AG04450 (cell line): ENCODE measurements at regions of chr5 and their contacts with region 1.

Region 1: DNA sequence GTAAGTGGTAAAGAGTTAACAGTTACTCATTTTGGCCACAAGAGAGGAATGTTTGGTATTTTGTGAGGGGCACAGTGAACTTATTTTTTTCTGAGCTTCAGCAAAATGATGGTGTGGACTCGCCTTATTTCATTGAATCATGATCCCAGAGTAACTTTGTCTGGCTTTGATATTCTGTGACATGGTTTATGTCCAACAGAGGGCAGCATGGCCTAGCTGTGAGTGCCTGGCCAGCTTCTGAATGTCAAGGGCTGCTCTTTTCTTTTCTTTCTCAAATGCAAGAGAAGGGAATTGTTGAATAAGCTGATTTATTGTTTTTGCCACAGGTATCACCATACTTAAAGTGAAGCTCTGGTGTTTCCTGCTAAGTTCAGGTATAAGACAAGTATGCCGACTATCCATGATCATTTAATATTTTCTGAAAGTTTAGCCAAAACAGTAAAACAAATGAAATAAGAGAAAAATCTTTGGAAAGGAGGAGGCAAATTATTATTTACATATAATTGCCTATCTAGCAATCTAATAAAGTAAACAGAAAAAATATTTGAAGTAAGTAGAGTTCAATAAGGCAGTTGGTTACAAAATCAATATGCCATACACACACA is 31.7 kb downstream of the MRPL22 start:
- DNase-seq: no peak
- H3K4me3 ChIP-seq: no peak overlapping the region
- H3K27ac ChIP-seq: no peak overlapping the region
- H3K27me3 ChIP-seq: no peaks in the 10 kb centered on the region
- CTCF ChIP-seq: peak; percentile 79

Region 2: DNA sequence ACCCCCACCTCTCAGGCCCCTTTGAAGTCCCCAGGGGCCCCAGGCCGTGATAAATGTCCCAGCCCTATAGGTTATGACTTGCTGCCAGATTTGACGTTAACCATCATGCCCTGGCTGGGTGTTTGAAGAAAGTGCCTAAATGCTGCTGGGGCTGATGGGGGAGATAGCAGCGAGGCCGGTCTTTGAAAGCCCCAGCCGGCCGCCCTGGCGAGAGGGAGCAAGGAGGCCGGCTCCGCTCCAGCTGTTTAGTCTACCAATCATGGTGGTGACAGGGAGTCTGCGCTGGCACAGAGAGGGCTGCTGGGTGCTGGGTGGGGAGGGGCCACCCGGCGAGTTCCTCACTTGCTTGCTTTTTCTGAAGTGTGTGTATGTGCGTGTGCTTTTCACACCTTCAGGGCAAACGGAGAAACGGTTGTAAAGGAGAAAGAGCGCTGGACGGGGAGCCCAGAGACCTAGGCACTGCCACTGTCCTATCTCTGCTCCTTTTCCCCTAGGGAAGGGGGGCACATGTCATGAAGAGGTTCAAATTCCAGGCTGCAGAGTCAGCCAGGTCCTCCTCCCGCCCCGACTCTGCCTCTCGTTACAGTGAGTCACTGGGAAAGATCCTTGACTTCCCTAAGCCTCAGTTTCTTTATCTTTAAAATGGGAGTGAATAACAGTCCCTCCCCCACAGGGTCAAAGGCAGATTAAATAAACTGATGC is 368.4 kb before region 1 on chr5:
- CTCF ChIA-PET with region 1: no interaction called
- POLR2A ChIA-PET with region 1: no interaction called
- DNase-seq: no peak
- H3K4me3 ChIP-seq: no peak overlapping the region; the same call in 1 of the 2 replicates
- H3K27ac ChIP-seq: no peak overlapping the region
- H3K27me3 ChIP-seq: peaks cover 32% of the 10 kb centered on the region
- CTCF ChIP-seq: no peak

Region 3: GRCh38 chr5:154945695-154946301 is 26.8 kb before region 1 on chr5:
- CTCF ChIA-PET with region 1: interaction called, 17 read pairs
- POLR2A ChIA-PET with region 1: no interaction called
- DNase-seq: no peak
- H3K4me3 ChIP-seq: no peak overlapping the region
- H3K27ac ChIP-seq: no peak overlapping the region
- H3K27me3 ChIP-seq: no peaks in the 10 kb centered on the region
- CTCF ChIP-seq: peak; percentile 69

Region 4: GRCh38 chr5:154962494-154962893 is 10.1 kb before region 1 on chr5:
- CTCF ChIA-PET with region 1: interaction called, 29 read pairs
- POLR2A ChIA-PET with region 1: no interaction called
- DNase-seq: no peak
- H3K4me3 ChIP-seq: no peak overlapping the region
- H3K27ac ChIP-seq: no peak overlapping the region
- H3K27me3 ChIP-seq: no peaks in the 10 kb centered on the region
- CTCF ChIP-seq: no peak

Region 5: DNA sequence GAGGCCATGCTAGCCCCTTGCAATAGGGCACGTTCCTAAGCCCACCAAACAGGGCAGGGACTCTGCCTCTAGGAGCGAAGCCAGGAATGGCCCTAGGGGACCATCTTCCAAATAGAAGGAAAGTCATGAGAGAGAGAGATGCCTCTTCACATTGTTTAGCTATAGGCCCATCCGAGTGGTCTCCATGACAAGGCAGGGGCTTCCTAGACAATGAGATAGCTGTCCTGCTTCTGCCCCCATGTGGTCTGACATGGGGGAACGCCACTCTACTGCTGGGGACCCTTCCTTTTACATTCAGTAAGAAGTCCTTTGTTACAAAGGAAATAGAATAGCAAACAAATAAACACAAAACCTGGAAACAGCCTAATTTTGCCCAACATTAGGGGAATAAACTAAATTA is 23.1 kb after region 1 on chr5:
- CTCF ChIA-PET with region 1: interaction called, 19 read pairs
- POLR2A ChIA-PET with region 1: interaction called, 3 read pairs
- DNase-seq: no peak
- H3K4me3 ChIP-seq: no peak overlapping the region
- H3K27ac ChIP-seq: no peak overlapping the region
- H3K27me3 ChIP-seq: no peaks in the 10 kb centered on the region
- CTCF ChIP-seq: no peak

Region 6: GRCh38 chr5:155004138-155004744 is 31.7 kb after region 1 on chr5:
- CTCF ChIA-PET with region 1: interaction called, 14 read pairs
- POLR2A ChIA-PET with region 1: no interaction called
- DNase-seq: no peak
- H3K4me3 ChIP-seq: no peak overlapping the region
- H3K27ac ChIP-seq: no peak overlapping the region
- H3K27me3 ChIP-seq: no peaks in the 10 kb centered on the region
- CTCF ChIP-seq: peak; percentile 37; the same call in 1 of the 2 replicates

Region 7: GRCh38 chr5:155136216-155136850 is 163.8 kb after region 1 on chr5:
- CTCF ChIA-PET with region 1: interaction called, 14 read pairs
- POLR2A ChIA-PET with region 1: no interaction called
- DNase-seq: no peak
- H3K4me3 ChIP-seq: no peak overlapping the region
- H3K27ac ChIP-seq: no peak overlapping the region
- H3K27me3 ChIP-seq: no peaks in the 10 kb centered on the region
- CTCF ChIP-seq: no peak

Region 8: DNA sequence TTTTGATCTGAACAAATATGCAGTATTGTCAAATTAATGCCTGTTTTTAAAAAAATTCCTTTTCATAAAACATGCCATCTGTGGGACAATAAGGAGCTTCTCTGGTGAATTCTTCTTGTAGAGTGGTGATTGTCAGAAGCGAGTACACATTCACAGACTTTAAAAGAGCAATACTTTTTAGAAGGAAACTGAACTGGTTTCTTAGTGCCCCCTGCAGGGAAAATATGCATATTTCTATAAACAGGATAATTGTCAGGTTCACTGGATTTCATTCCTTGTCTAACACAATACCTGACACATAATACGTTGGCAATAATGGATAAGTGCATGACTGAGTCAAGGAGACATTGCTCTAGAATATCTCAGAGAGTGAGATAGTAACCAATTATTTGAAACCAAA is 174.6 kb after region 1 on chr5:
- CTCF ChIA-PET with region 1: interaction called, 71 read pairs
- POLR2A ChIA-PET with region 1: no interaction called
- DNase-seq: no peak
- H3K4me3 ChIP-seq: no peak overlapping the region
- H3K27ac ChIP-seq: no peak overlapping the region
- H3K27me3 ChIP-seq: no peaks in the 10 kb centered on the region
- CTCF ChIP-seq: 0 out of 2 replicates have a peak, but pooled peaks have one; percentile 17